WTC11 (cell line): ENCODE measurements at regions of chr19 and their contacts with region 1.

Region 1: GRCh38 chr19:24033301-24033962 is 53.6 kb upstream of the ZNF254 start:
- DNase-seq: peak; percentile 85
- ATAC-seq: peak; percentile 97
- H3K4me3 Mint-ChIP-seq: peak overlapping the region; percentile 99
- H3K27ac Mint-ChIP-seq: peak overlapping the region; percentile 100
- H3K4me1 Mint-ChIP-seq: peaks cover 29% of the 10 kb centered on the region
- H3K27me3 Mint-ChIP-seq: no peaks in the 10 kb centered on the region
- CTCF ChIP-seq: no peak

Region 2: DNA sequence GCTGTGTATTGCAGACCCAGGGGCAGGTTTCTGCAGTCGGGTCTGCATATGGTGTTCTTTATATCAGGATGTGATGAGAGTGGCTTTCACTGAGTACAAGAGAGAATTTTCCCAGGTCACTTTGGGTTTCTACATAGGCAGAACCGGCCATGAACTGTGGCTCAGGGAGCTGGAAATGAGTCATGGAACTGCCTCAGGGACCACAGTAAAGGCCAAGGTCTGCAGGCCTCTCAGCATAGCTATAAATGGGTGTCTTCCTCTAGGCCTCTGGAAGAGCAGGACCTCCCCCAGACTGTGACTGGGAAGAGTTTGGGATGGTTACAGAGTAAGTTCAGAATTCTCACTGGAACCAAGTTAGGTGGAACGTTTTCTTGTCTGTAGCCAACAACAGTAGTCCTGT is 222.9 kb before region 1 on chr19:
- CTCF ChIA-PET with region 1: no interaction called
- POLR2A ChIA-PET with region 1: no interaction called
- DNase-seq: no peak
- ATAC-seq: no peak
- H3K4me3 Mint-ChIP-seq: no peak overlapping the region
- H3K27ac Mint-ChIP-seq: no peak overlapping the region
- H3K4me1 Mint-ChIP-seq: peaks cover 2% of the 10 kb centered on the region; the same call in 1 of the 2 replicates
- H3K27me3 Mint-ChIP-seq: no peaks in the 10 kb centered on the region
- CTCF ChIP-seq: no peak

Region 3: DNA sequence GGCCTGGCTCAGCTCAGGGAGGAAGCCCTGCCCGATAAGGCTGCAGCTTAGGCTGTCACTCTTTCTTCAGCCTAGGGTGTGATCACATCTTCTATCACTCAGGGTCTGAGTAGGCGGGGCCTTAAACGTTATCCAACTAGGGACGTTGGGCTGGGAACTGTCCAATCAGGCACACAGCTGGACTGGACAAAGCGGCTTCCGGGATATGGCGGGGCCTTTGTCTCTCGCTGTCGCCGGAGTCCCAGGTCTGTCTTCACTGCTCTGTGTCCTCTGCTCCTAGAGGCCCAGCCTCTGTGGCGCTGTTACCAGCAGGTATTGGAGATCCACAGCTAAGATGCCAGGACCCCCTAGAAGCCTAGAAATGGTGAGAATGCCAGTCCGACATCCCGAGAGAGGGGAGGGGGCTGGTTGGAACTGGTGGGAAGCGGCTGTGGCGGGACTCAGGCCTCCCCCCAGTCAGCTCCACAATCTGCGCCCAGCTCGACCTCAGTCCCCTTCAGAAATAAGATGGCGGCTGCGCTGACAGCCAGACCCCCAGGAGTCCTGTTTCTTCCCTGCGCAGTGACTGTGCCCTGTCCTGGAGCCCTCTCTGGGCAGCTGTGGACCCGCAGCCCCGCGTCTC is 53.7 kb after region 1 on chr19 and contains the start of gene ZNF254:
- CTCF ChIA-PET with region 1: interaction called, 4 read pairs
- POLR2A ChIA-PET with region 1: interaction called, 25 read pairs
- DNase-seq: peak; percentile 86
- ATAC-seq: peak; percentile 100
- H3K4me3 Mint-ChIP-seq: peak within 1 kb of the TSS; percentile 96
- H3K27ac Mint-ChIP-seq: peak within 1 kb of the TSS; percentile 100
- H3K4me1 Mint-ChIP-seq: peaks cover 6% of the 10 kb centered on the region; the same call in 1 of the 2 replicates
- H3K27me3 Mint-ChIP-seq: no peaks in the 10 kb centered on the region
- CTCF ChIP-seq: no peak
- total RNA-seq, gene ZNF254: 28.0 to 34.5 TPM (median 28.9 TPM) in 3 replicates